Mammary epithelial cell (primary cell): ENCODE measurements at regions of chr16 and their contacts with region 1.

Region 1: GRCh38 chr16:52976539-52977167 is 76.0 kb downstream of the CHD9NB start:
- DNase-seq: peak; percentile 52
- H3K4me3 ChIP-seq: no peak overlapping the region
- H3K27ac ChIP-seq: no peak overlapping the region
- H3K4me1 ChIP-seq: no peaks in the 10 kb centered on the region
- H3K27me3 ChIP-seq: no peaks in the 10 kb centered on the region
- CTCF ChIP-seq: peak; percentile 59 to 75

Region 2: DNA sequence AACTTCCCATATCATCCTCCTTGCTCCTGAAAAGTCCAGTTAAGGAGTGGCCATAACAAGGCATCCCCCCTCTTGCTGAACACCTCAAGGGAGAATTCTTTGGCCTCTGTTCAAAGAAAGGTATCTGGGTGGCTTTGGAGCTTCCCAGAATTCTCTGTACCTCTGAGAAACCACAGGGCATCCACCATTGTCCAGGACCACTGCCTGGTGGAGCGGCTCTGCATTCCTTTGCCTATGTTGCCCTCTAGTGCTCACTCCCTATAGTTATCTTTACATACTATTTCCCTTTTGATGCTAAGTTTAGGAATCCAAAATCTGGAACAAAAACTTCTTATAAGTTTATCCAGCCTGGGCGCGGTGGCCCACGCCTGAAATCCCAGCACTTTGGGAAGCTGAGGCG is 45.7 kb after region 1 on chr16:
- CTCF ChIA-PET with region 1: interaction called, 3 read pairs
- dilution Hi-C with region 1: no loop called
- in situ Hi-C with region 1: no loop called
- intact Hi-C with region 1: loop called (anchors 1 kb)
- DNase-seq: peak; percentile 36
- H3K4me3 ChIP-seq: no peak overlapping the region
- H3K27ac ChIP-seq: no peak overlapping the region
- H3K4me1 ChIP-seq: peaks cover 4% of the 10 kb centered on the region
- H3K27me3 ChIP-seq: no peaks in the 10 kb centered on the region
- CTCF ChIP-seq: peak; percentile 51 to 62

Region 3: DNA sequence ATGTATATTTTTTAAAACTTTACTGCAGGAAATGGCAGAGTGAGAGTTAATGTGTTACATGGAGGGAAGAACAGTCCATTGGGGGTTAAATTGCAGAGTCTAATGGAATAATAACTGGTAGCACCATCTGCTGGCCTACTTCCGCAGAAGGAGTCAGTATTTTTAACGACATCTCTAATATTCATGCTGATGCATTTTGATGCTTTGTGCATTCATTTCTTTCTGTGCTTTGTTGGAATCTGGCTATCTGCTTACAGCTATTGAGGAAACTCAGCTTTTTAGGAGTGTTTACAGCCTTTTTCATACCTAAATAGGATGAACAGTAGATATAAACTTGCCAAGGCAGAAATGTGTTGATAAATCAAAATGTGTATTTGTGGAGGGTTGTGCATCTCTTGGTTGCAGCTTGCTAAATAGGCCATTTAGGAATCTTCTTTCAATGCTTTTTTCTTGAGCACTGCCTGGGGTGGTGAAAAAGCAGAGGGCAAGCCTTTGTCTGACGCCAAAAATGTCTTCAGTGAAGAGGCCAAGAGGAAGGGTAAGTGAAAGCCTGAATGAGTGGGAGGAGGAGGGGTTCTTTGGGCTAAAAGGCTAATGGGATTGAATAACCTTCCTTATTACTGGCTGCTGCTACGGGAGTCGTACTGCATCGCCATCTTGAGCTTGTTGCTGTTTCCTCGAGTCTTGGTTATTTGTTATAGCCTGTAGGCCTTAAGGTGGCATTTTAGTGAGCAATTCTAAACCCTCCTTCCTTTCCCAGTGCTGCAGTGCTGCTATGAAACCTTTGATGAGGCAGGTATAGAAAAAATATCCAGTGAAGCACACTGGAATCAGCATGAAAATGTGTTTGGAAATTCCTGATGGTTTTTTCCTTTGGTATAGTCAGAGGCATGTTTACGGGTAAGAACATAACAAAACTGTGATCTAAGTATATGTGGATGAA is 231.4 kb after region 1 on chr16:
- CTCF ChIA-PET with region 1: interaction called, 7 read pairs
- dilution Hi-C with region 1: no loop called
- in situ Hi-C with region 1: no loop called
- intact Hi-C with region 1: loop called (anchors 2 kb)
- DNase-seq: peak; percentile 82
- H3K4me3 ChIP-seq: peak overlapping the region; percentile 57 to 79 (median 63)
- H3K27ac ChIP-seq: peak overlapping the region; percentile 90
- H3K4me1 ChIP-seq: peaks cover 9% of the 10 kb centered on the region
- H3K27me3 ChIP-seq: no peaks in the 10 kb centered on the region
- CTCF ChIP-seq: peak; percentile 55 to 60

Region 4: GRCh38 chr16:53282975-53283946 is 306.6 kb after region 1 on chr16:
- CTCF ChIA-PET with region 1: interaction called, 10 read pairs
- dilution Hi-C with region 1: no loop called
- in situ Hi-C with region 1: no loop called
- intact Hi-C with region 1: loop called (anchors 2 kb)
- DNase-seq: peak; percentile 38
- H3K4me3 ChIP-seq: no peak overlapping the region
- H3K27ac ChIP-seq: no peak overlapping the region
- H3K4me1 ChIP-seq: no peaks in the 10 kb centered on the region
- H3K27me3 ChIP-seq: no peaks in the 10 kb centered on the region
- CTCF ChIP-seq: peak; percentile 64 to 69